BJ (cell line): ENCODE measurements at regions of chr2 and their contacts with region 1.

Region 1: DNA sequence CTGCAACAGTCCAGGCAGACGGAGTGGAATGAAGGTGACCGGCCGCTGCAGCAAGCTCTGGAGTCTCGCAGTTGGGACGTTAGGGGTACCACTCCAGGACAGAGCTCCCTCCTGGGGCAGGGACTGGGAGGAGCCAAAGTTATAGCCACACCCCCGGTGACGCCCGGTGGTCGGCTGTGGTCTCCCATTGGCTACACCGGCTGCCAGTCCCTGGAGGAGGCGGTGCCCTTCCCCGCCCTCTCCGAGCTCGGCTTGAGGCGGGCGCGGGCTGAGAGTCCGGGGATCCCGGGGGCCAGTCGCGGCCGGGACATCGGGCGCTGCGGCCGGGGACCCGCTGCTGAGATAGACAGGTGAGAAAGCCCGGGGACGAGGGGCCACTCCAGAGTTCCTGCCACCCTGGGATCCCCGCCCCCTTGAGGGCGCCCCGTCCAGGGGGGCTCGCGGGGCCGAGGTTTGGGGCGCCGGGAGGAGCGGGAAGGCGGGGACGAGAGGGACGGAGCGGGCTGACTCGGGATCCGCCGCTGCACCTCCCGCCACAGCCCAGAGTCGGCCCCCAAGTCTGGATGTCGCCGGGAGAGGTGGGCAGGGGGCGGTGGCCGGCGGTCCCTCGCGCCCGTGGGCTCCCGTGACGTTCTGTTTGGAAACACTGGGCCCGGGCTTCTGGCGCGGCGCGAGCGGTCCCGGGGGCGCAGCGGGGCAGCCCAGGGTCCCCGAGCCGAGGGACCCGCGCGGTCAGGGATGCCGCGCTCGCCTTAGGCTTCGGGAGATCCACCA is at the start of gene PLEKHH2:
- DNase-seq: peak; percentile 26
- H3K4me3 ChIP-seq: peak within 1 kb of the TSS; percentile 62
- H3K27me3 ChIP-seq: peaks cover 8% of the 10 kb centered on the region
- CTCF ChIP-seq: no peak
- polyA plus RNA-seq, gene PLEKHH2: 2.2 and 3.6 TPM in 2 replicates

Region 2: DNA sequence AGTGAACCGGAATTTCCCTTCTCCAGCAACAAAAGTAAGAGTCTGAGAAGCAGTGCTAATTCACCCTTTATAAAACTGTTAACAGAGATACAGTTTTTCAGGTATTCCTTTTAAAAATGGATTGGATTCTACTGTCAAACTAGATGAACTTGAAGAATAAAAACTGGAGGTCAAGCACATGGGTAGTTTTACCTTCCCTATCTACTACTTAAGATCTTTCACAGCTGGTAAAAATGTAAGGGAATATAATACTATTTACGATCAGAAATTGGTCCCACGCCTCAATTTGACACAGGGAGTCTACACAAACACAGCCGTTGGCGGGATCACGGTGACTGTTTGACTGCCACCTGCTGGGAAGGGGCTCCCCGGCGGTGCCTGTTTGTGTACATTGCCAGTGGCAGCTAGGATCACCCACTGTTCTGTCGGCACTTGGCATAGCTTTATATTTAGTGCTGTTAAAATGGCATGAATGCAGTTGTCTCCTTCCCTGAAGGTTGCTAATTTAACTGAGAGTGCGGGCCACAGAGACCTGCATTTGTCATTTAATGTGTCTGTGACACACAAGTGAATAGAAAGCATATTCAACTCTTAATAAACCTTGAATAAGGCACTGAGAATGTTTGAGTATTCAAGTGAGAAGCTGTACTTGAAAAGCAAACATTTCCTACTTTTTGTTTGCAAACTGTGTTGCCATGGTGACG is 261.1 kb after region 1 on chr2:
- CTCF ChIA-PET with region 1: no interaction called
- POLR2A ChIA-PET with region 1: interaction called, 15 read pairs
- DNase-seq: no peak
- H3K4me3 ChIP-seq: no peak overlapping the region
- H3K27me3 ChIP-seq: no peaks in the 10 kb centered on the region
- CTCF ChIP-seq: peak; percentile 35